ENCODE measurements at regions of chr13 and their contacts with region 1.

Region 1: GRCh38 chr13:98842864-98843481 is 90.5 kb upstream of the SLC15A1 start:
- DNase-seq: peak; percentile 65 to 82 (median 72)
- ATAC-seq: peak; percentile 75 to 87 (median 84)
- H3K4me3 ChIP-seq: no peak overlapping the region
- H3K27ac ChIP-seq: no peak overlapping the region
- H3K4me1 ChIP-seq: peaks cover 0 to 14% (median 0%) of the 10 kb centered on the region in 12 donors
- H3K27me3 ChIP-seq: no peaks in the 10 kb centered on the region
- CTCF ChIP-seq: peak; percentile 79 to 90 (median 83)
- POLR2A ChIP-seq: no peak

Region 2: GRCh38 chr13:98672944-98673545 is 169.9 kb before region 1 on chr13:
- intact Hi-C with region 1: loop called in 7 of 10 experiments (anchors 2 to 10 kb)
- DNase-seq: peak; percentile 66 to 74 (median 70)
- ATAC-seq: peak; percentile 66 to 96 (median 92)
- H3K4me3 ChIP-seq: peak overlapping the region in 1 of 12 donors; percentile 14
- H3K27ac ChIP-seq: peak overlapping the region in 1 of 12 donors; percentile 1
- H3K4me1 ChIP-seq: peaks cover 0 to 15% (median 7%) of the 10 kb centered on the region in 12 donors
- H3K27me3 ChIP-seq: no peaks in the 10 kb centered on the region
- CTCF ChIP-seq: peak; percentile 82 to 96 (median 88)
- POLR2A ChIP-seq: no peak

Region 3: GRCh38 chr13:98890186-98890585 is 47.2 kb after region 1 on chr13:
- intact Hi-C with region 1: no loop called
- DNase-seq: peak in 1 of 5 donors; percentile 33
- ATAC-seq: peak; percentile 28 to 88 (median 68)
- H3K4me3 ChIP-seq: no peak overlapping the region
- H3K27ac ChIP-seq: peak overlapping the region in 1 of 12 donors; percentile 34
- H3K4me1 ChIP-seq: peaks cover 0 to 25% (median 11%) of the 10 kb centered on the region in 12 donors
- H3K27me3 ChIP-seq: no peaks in the 10 kb centered on the region
- CTCF ChIP-seq: no peak
- POLR2A ChIP-seq: no peak

Region 4: DNA sequence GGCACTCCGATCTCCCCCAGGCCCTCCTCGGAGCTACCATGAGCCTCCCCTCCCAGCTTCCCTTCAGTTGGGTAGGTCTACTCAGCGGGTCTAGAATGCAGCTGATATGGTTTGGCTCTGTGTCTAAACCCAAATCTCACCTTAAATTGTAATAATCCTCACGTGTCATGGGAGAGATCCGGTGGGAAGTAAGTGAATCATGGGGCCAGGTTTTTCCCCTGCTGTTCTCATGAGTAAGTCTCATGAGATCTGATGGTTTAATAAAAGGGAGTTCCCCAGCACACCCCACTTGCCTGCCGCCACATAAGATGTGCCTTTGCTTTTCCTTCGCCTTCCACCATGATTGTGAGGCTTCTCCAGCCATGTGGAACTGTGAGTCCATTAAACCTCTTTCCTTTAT is 149.4 kb after region 1 on chr13:
- intact Hi-C with region 1: no loop called
- DNase-seq: no peak
- ATAC-seq: no peak
- H3K4me3 ChIP-seq: no peak overlapping the region
- H3K27ac ChIP-seq: no peak overlapping the region
- H3K4me1 ChIP-seq: peaks cover 0 to 14% (median under 1%) of the 10 kb centered on the region in 12 donors
- H3K27me3 ChIP-seq: no peaks in the 10 kb centered on the region
- CTCF ChIP-seq: no peak
- POLR2A ChIP-seq: no peak

Region 5: GRCh38 chr13:99087096-99087953 is 244.4 kb after region 1 on chr13:
- intact Hi-C with region 1: loop called in 1 of 10 experiments (anchors 5 kb)
- DNase-seq: peak; percentile 92 to 95 (median 92)
- ATAC-seq: peak; percentile 95 to 99 (median 98)
- H3K4me3 ChIP-seq: peak overlapping the region; percentile 72 to 93 (median 87)
- H3K27ac ChIP-seq: peak overlapping the region; percentile 78 to 97 (median 94)
- H3K4me1 ChIP-seq: peaks cover 0 to 36% (median 13%) of the 10 kb centered on the region in 12 donors
- H3K27me3 ChIP-seq: peaks cover 0 to 59% (median 0%) of the 10 kb centered on the region in 9 donors
- CTCF ChIP-seq: peak in 7 of 12 donors; percentile 16 to 50 (median 31)
- POLR2A ChIP-seq: peak; percentile 22 to 83